ENCODE measurements at regions of chr14 and their contacts with region 1.

Region 1: DNA sequence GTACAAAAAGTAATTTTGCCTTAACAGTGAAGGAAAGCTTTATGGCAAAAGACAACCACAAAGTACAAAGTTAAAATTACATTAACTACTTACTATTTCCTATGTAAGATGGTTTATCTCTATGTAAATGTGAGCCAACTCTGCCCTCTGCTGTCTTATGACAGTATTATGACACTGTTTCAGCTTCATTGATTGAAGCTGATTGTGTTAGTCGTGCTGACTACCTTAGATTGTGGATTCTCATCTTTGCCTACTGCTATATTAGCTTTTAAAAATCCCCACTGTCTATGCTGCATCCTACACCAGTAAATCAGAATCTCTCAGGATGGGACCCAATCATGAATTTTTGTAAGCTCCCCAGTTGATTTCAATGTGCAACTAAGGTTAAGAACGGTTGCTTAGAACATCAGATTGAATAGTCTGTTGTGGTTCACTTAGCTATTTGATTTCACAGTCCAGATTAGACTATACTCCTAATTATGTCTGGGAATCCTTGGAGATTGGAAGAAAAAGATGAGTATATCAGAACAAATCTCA is 12.2 kb upstream of the SPTB start:
- DNase-seq: peak in 2 of 10 donors; percentile 24 to 56
- H3K4me3 ChIP-seq: no peak overlapping the region
- H3K27ac ChIP-seq: no peak overlapping the region
- H3K27me3 ChIP-seq: peaks cover 0 to 5% (median 0%) of the 10 kb centered on the region in 45 donors
- CTCF ChIP-seq: peak; percentile 33 to 94 (median 75)

Region 2: DNA sequence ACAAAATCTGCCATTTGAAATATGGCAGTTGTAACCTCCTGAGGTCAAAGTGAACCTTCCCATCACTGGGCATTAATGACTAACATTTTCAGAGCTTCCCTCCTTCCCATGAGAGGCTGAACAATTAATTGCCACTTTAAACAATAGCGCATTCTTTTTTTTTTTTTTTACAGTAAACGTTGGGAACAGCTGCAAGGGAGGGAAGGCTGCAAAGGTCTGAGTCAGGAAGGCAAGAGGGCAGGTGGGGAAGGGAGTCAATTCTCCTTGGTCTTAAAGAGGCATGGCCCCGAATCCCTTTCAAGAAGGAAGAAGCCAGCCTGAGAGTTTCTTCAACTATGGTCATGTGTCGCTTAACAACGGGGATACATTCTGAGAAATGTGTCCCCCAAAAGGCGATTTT is 228.7 kb before region 1 on chr14:
- intact Hi-C with region 1: loop called in 1 of 2 experiments (anchors 10 kb)
- DNase-seq: no peak
- H3K4me3 ChIP-seq: no peak overlapping the region
- H3K27ac ChIP-seq: no peak overlapping the region
- H3K27me3 ChIP-seq: no peaks in the 10 kb centered on the region
- CTCF ChIP-seq: no peak

Region 3: GRCh38 chr14:64823305-64823861 is 68.5 kb before region 1 on chr14:
- intact Hi-C with region 1: loop called in 1 of 2 experiments (anchors 5 kb)
- DNase-seq: peak; percentile 58 to 85 (median 68)
- H3K4me3 ChIP-seq: peak overlapping the region in 33 of 59 donors; percentile 1 to 54 (median 32)
- H3K27ac ChIP-seq: peak overlapping the region in 3 of 59 donors; percentile 13 to 72 (median 18)
- H3K27me3 ChIP-seq: no peaks in the 10 kb centered on the region
- CTCF ChIP-seq: peak; percentile 39 to 89 (median 74)